ENCODE measurements at regions of chr15 and their contacts with region 1.

Region 1: DNA sequence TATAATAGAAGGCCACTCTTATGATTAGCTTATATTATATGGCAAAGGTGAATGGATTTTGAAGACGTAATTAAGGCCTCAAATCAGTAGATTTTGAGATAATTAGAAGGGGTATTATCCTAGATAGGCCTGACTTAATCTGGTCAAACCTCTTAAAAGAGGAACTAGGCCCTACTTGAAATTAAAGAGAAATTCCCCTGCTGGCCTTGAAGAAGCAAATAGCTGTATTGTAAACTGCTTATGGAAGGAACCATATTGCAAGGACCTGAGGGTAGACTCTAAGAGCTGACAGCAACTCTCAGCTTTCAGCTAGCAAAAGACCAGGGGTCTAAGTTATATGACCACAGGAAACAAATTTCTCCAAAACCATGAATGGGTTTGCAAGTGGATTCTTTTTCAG is 219.0 kb upstream of the ONECUT1 start:
- DNase-seq: no peak
- H3K4me3 ChIP-seq: no peak overlapping the region
- H3K27ac ChIP-seq: no peak overlapping the region
- H3K4me1 ChIP-seq: no peaks in the 10 kb centered on the region
- H3K27me3 ChIP-seq: no peaks in the 10 kb centered on the region
- CTCF ChIP-seq: no peak

Region 2: GRCh38 chr15:53068636-53069035 is 59.5 kb after region 1 on chr15:
- intact Hi-C with region 1: no loop called
- DNase-seq: no peak
- H3K4me3 ChIP-seq: no peak overlapping the region
- H3K27ac ChIP-seq: no peak overlapping the region
- H3K4me1 ChIP-seq: no peaks in the 10 kb centered on the region
- H3K27me3 ChIP-seq: no peaks in the 10 kb centered on the region
- CTCF ChIP-seq: no peak

Region 3: GRCh38 chr15:53080484-53080883 is 71.4 kb after region 1 on chr15:
- intact Hi-C with region 1: loop called (anchors 1 kb)
- DNase-seq: no peak
- H3K4me3 ChIP-seq: no peak overlapping the region
- H3K27ac ChIP-seq: no peak overlapping the region
- H3K4me1 ChIP-seq: no peaks in the 10 kb centered on the region
- H3K27me3 ChIP-seq: no peaks in the 10 kb centered on the region
- CTCF ChIP-seq: no peak